ENCODE measurements at regions of chr13 and their contacts with region 1.

Region 1: DNA sequence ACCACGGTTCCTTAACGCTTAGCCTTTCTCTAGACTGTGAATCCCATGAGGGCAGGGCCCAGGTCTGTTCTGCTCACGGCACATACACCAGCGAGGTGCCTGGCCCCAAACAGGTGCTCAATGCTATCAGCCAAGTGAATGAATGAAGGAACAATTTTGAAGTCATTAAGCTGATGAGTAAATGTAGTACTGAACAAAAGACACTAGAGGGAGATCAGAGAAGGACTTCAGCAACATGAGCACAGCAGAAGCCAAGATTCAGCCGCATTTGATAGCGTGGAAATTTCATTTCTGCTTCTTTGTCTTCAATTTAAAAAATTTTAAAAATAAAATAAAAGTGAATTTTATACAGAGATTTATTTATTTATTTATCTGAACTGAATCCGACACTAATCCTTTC is 20.1 kb upstream of the MYO16 start:
- DNase-seq: peak; percentile 49
- ATAC-seq: peak; percentile 75
- H3K4me3 ChIP-seq: no peak overlapping the region
- H3K27ac ChIP-seq: no peak overlapping the region
- H3K4me1 ChIP-seq: no peaks in the 10 kb centered on the region
- H3K27me3 ChIP-seq: no peaks in the 10 kb centered on the region
- CTCF ChIP-seq: peak; percentile 59
- POLR2A ChIP-seq: no peak
- RAD21 ChIP-seq: peak; percentile 61

Region 2: DNA sequence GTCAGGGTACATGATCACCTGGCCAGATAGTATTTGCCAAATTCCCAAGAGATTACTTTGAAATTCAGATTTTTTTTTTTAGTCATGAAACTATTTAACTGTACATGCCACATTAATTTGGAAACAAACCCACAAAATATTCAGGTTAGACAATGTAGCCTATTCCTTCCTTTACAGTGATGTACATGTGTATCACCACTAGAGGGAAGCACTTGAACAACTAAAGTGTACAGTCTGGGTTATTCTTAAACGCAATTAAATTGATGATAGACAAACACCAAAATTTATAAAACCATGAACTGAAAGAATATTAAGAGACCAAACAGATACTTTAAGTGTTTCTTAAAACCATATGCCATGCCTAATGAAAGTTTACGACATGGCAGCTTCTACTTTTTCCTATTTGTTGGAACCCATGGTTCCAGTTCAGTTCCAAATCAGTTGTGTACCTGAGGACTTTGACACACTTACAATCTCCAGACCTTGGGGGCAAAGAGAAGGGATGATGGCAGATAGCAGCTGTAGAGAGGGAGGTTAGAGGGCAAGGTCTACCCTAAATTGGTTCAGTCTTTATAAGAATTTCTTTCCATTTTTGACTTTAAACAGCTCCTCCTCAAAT is 287.0 kb before region 1 on chr13:
- CTCF ChIA-PET with region 1: no interaction called
- POLR2A ChIA-PET with region 1: no interaction called
- dilution Hi-C with region 1: no loop called
- in situ Hi-C with region 1: no loop called
- intact Hi-C with region 1: loop called (anchors 5 kb)
- DNase-seq: peak; percentile 52
- ATAC-seq: peak; percentile 88
- H3K4me3 ChIP-seq: no peak overlapping the region
- H3K27ac ChIP-seq: no peak overlapping the region
- H3K4me1 ChIP-seq: no peaks in the 10 kb centered on the region
- H3K27me3 ChIP-seq: peaks cover 17% of the 10 kb centered on the region
- CTCF ChIP-seq: peak; percentile 82
- POLR2A ChIP-seq: no peak
- RAD21 ChIP-seq: peak; percentile 77

Region 3: GRCh38 chr13:108889324-108889984 is 280.1 kb after region 1 on chr13:
- CTCF ChIA-PET with region 1: interaction called, 8 read pairs
- POLR2A ChIA-PET with region 1: no interaction called
- dilution Hi-C with region 1: no loop called
- in situ Hi-C with region 1: loop called (anchors 5 kb)
- intact Hi-C with region 1: no loop called
- DNase-seq: no peak
- ATAC-seq: no peak
- H3K4me3 ChIP-seq: no peak overlapping the region
- H3K27ac ChIP-seq: no peak overlapping the region
- H3K4me1 ChIP-seq: no peaks in the 10 kb centered on the region
- H3K27me3 ChIP-seq: peaks cover 2% of the 10 kb centered on the region
- CTCF ChIP-seq: no peak
- POLR2A ChIP-seq: no peak
- RAD21 ChIP-seq: no peak

Measured in IMR-90 (cell line).